ENCODE measurements at regions of chr15 and their contacts with region 1.

Region 1: GRCh38 chr15:39580117-39580484 is 778 bp upstream of the THBS1 start:
- DNase-seq: peak; percentile 91
- H3K4me3 Mint-ChIP-seq: peak overlapping the region; percentile 55
- H3K27ac Mint-ChIP-seq: no peak overlapping the region
- H3K4me1 Mint-ChIP-seq: peaks cover 14% of the 10 kb centered on the region
- H3K27me3 Mint-ChIP-seq: peaks cover 49% of the 10 kb centered on the region

Region 2: GRCh38 chr15:38707802-38708671 is 872.1 kb before region 1 on chr15:
- CTCF ChIA-PET with region 1: interaction called, 18 read pairs
- POLR2A ChIA-PET with region 1: no interaction called
- intact Hi-C with region 1: loop called (anchors 2 kb)
- DNase-seq: peak; percentile 46
- H3K4me3 Mint-ChIP-seq: no peak overlapping the region
- H3K27ac Mint-ChIP-seq: no peak overlapping the region
- H3K4me1 Mint-ChIP-seq: peaks cover 7% of the 10 kb centered on the region
- H3K27me3 Mint-ChIP-seq: no peaks in the 10 kb centered on the region

Region 3: DNA sequence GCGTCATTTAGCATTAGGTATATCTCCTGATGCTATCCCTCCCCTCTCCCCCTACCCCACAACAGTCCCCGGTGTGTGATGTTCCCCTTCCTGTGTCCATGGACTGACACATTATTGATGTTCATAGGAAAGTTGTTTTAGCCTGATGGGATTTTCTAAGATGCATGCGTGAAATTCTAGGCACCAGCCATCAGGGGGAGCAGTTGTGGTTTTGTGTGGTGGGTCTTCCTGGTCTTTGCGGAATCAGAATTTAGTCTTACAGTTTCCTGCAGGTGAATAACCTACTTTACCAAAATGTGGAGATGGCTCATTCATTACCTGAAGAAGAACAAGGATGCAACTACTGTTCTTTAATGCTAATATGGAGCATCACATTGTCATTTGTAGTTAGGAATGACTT is 454.2 kb before region 1 on chr15:
- CTCF ChIA-PET with region 1: interaction called, 23 read pairs
- POLR2A ChIA-PET with region 1: no interaction called
- intact Hi-C with region 1: loop called (anchors 5 kb)
- DNase-seq: peak; percentile 35
- H3K4me3 Mint-ChIP-seq: no peak overlapping the region
- H3K27ac Mint-ChIP-seq: no peak overlapping the region
- H3K4me1 Mint-ChIP-seq: no peaks in the 10 kb centered on the region
- H3K27me3 Mint-ChIP-seq: peaks cover 7% of the 10 kb centered on the region

Region 4: GRCh38 chr15:39312984-39313383 is 267.1 kb before region 1 on chr15:
- CTCF ChIA-PET with region 1: no interaction called
- POLR2A ChIA-PET with region 1: no interaction called
- intact Hi-C with region 1: loop called (anchors 2 kb)
- DNase-seq: no peak
- H3K4me3 Mint-ChIP-seq: no peak overlapping the region
- H3K27ac Mint-ChIP-seq: no peak overlapping the region
- H3K4me1 Mint-ChIP-seq: no peaks in the 10 kb centered on the region
- H3K27me3 Mint-ChIP-seq: peaks cover 13% of the 10 kb centered on the region

Region 5: GRCh38 chr15:39594056-39594763 is 14.1 kb after region 1 on chr15:
- CTCF ChIA-PET with region 1: interaction called, 17 read pairs
- POLR2A ChIA-PET with region 1: interaction called, 3 read pairs
- intact Hi-C with region 1: no loop called
- DNase-seq: peak; percentile 63
- H3K4me3 Mint-ChIP-seq: no peak overlapping the region
- H3K27ac Mint-ChIP-seq: no peak overlapping the region
- H3K4me1 Mint-ChIP-seq: peaks cover 8% of the 10 kb centered on the region
- H3K27me3 Mint-ChIP-seq: no peaks in the 10 kb centered on the region

Region 6: DNA sequence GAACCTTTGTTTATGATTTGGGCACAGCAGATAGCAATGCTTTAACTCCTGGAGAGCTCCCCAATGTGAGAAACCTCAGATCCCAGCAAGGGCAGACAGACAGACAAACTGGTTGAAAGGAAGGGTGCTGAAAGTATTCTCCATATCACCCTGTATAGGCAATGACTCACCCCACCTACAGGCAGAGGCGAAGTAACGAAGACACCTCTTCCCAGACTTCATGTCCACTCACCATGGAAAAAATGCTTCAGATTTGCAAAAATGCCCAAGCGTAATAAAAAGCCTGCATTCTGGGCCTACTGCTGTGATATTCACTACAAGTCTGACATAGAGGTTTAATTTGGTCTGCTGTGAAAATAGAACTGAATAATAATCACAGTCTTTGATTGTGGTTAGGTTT is 51.3 kb after region 1 on chr15:
- CTCF ChIA-PET with region 1: interaction called, 20 read pairs
- POLR2A ChIA-PET with region 1: no interaction called
- intact Hi-C with region 1: loop called (anchors 2 kb)
- DNase-seq: peak; percentile 46
- H3K4me3 Mint-ChIP-seq: no peak overlapping the region
- H3K27ac Mint-ChIP-seq: peak overlapping the region; percentile 35
- H3K4me1 Mint-ChIP-seq: peaks cover 45% of the 10 kb centered on the region
- H3K27me3 Mint-ChIP-seq: no peaks in the 10 kb centered on the region

Region 7: GRCh38 chr15:39756806-39757522 is 176.9 kb after region 1 on chr15:
- CTCF ChIA-PET with region 1: interaction called, 161 read pairs
- POLR2A ChIA-PET with region 1: no interaction called
- intact Hi-C with region 1: loop called (anchors 2 kb)
- DNase-seq: no peak
- H3K4me3 Mint-ChIP-seq: no peak overlapping the region
- H3K27ac Mint-ChIP-seq: no peak overlapping the region
- H3K4me1 Mint-ChIP-seq: no peaks in the 10 kb centered on the region
- H3K27me3 Mint-ChIP-seq: no peaks in the 10 kb centered on the region

Region 8: DNA sequence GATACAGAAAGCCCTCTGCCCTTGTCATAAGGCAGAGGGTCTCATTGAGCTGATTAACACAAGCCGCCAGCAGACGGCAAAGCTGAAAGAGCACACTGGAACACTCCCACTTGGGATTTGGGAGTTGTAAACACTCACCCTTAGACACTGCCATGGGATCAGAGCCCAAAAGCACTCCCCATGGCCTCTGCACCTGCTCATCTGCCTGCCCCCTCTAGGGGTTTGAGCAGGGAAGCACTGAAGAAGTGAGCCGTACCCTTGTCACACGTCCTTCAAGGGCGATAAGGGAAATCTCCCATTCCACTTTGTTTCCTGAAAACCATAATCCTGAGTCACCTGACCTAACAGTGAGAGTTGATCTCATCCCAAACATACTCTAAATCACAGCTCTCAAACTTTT is 187.8 kb after region 1 on chr15:
- CTCF ChIA-PET with region 1: no interaction called
- POLR2A ChIA-PET with region 1: no interaction called
- intact Hi-C with region 1: no loop called
- DNase-seq: no peak
- H3K4me3 Mint-ChIP-seq: no peak overlapping the region
- H3K27ac Mint-ChIP-seq: no peak overlapping the region
- H3K4me1 Mint-ChIP-seq: no peaks in the 10 kb centered on the region
- H3K27me3 Mint-ChIP-seq: no peaks in the 10 kb centered on the region

Measured in activated CD4-positive, alpha-beta memory T cell treated with anti-CD3 and anti-CD28 coated beads for 36 hours (primary cell).